Endothelial cell of umbilical vein (primary cell): ENCODE measurements at regions of chr20 and their contacts with region 1.

Region 1: DNA sequence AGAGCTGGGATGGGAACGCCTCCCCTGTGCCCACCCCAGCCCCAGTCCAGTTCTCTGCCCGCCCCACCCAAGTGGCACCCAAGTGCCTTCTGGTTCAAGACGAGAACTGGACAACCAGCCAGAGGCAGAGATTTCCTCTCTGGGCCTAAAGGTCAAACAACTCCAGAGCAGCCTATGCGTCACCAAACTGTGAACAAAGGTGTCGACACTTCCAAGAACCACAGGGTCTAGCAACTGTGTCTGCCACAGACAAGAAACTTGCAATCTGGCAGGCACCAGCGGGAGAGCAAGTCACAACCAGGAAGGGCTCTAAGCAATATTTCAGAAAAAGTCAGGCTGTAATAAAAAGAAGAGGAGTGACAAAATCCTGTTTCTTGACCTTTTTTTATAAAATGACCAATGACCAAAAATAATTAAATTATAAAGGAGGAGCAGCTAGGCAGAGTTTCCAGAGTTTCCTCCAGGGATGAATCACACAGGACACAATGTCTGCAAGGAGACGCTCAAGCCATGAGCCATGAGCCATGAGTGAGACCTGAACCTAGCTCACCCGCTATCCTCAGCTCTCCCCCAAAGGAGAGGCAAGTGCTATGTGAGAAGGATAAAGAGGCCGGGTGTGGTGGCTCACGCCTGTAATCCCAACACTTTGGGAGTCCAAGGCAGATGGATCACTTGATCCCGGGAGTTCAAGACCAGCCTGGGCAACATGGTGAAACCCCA is 11.1 kb downstream of the EDEM2 start:
- DNase-seq: peak; percentile 88
- H3K4me3 ChIP-seq: no peak overlapping the region
- H3K27ac ChIP-seq: peak overlapping the region; percentile 97
- H3K4me1 ChIP-seq: peaks cover 34% of the 10 kb centered on the region
- H3K27me3 ChIP-seq: no peaks in the 10 kb centered on the region
- CTCF ChIP-seq: no peak
- POLR2A ChIP-seq: peak; percentile 33

Region 2: DNA sequence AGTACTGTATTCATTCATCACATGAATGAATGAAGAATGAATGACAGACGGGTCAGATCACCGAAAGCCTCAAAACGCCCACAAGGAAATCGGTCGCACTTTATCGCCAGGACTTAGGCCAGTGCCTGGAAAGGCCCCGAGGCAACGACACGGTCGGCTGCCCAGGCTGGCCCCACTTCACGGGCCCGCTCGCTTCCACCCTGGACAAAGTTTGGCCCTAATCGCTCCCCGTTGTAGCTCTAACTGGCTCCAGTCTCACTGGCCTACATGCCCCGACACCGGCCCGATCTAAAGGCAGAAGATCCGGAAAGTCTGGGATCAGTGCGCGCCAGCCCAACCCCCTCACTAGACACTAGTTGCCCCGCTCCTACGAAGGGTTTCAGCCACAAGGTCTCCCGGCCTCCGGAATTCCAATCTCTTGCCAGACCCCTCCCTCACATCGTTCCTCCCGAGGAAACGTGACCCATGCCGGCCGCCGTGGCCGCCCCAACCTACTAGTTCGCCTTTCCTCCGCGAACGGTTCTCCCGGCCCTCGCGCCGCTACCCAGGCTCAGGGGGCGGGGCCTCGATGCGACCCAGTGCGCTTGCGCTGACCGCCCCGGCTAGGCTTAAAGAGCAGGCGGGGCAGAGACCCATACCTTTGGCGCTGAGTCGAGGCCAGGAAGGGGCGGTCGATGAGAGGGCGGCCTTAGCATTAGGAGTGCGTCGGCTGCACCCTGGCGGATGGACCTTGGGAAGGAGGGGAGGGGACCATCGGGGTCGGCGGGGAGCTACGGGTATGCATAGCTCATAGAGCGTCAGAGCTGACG is 180.6 kb before region 1 on chr20 and contains the starts of genes GSS and MYH7B:
- CTCF ChIA-PET with region 1: no interaction called
- POLR2A ChIA-PET with region 1: no interaction called
- dilution Hi-C with region 1: no loop called
- intact Hi-C with region 1: no loop called
- DNase-seq: peak; percentile 99
- H3K4me3 ChIP-seq: peak within 1 kb of the TSS; percentile 58 to 84 (median 70)
- H3K27ac ChIP-seq: peak within 1 kb of the TSS; percentile 65
- H3K4me1 ChIP-seq: peaks cover 17% of the 10 kb centered on the region
- H3K27me3 ChIP-seq: no peaks in the 10 kb centered on the region
- CTCF ChIP-seq: peak; percentile 34 to 52
- POLR2A ChIP-seq: peak; percentile 56
- total RNA-seq, gene GSS: 46.9 and 47.9 TPM in 2 replicates
- total RNA-seq, gene MYH7B: 0.07 TPM in 1 of 2 replicates, not detected in the other

Region 3: DNA sequence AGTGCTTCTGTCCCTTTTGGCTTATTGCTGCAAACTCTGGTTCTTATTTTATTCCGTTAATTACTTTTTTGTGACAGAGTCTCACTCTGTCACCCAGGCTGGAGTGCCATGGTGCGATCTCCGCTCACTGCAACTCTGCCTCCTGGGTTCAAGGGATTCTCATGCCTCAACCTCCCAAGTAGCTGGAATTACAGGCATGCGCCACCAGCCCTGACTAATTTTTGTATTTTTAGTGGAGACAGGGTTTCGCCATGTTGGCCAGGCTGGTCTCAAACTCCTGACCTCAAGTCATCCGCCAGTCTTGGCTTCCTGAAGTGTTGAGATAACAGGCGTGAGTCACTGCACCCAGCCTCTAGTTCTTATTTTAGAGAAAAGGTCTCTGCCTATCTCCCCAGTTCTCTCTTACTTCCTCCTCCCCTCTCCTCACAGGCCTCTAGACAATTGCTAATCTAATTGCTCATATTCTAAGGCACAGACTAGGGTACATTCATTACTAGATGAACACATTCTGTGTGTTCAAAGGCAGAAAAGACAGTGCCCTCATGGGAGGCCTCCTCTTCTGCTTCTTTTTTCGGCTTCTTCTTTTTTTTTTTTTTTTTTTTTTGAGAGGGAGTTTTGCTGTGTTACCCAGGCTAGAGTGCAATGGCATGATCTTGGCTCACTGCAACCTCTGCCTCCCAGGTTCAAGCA is 15.9 kb before region 1 on chr20:
- CTCF ChIA-PET with region 1: interaction called, 5 read pairs
- POLR2A ChIA-PET with region 1: no interaction called
- dilution Hi-C with region 1: no loop called
- intact Hi-C with region 1: loop called (anchors 1 kb)
- DNase-seq: peak; percentile 72
- H3K4me3 ChIP-seq: no peak overlapping the region
- H3K27ac ChIP-seq: peak overlapping the region; percentile 54
- H3K4me1 ChIP-seq: peaks cover 48% of the 10 kb centered on the region
- H3K27me3 ChIP-seq: no peaks in the 10 kb centered on the region
- CTCF ChIP-seq: no peak
- POLR2A ChIP-seq: no peak

Region 4: GRCh38 chr20:35171753-35172433 is 35.9 kb after region 1 on chr20 and contains the start of gene PROCR:
- CTCF ChIA-PET with region 1: no interaction called
- POLR2A ChIA-PET with region 1: no interaction called
- dilution Hi-C with region 1: no loop called
- intact Hi-C with region 1: loop called (anchors 5 kb)
- DNase-seq: peak; percentile 98
- H3K4me3 ChIP-seq: peak within 1 kb of the TSS; percentile 70 to 93 (median 80)
- H3K27ac ChIP-seq: peak within 1 kb of the TSS; percentile 79
- H3K4me1 ChIP-seq: peaks cover 37% of the 10 kb centered on the region
- H3K27me3 ChIP-seq: no peaks in the 10 kb centered on the region
- CTCF ChIP-seq: no peak
- POLR2A ChIP-seq: peak; percentile 98
- total RNA-seq, gene PROCR: 228 and 251 TPM in 2 replicates